OCI-LY7 (cell line): ENCODE measurements at regions of chr14 and their contacts with region 1.

Region 1: DNA sequence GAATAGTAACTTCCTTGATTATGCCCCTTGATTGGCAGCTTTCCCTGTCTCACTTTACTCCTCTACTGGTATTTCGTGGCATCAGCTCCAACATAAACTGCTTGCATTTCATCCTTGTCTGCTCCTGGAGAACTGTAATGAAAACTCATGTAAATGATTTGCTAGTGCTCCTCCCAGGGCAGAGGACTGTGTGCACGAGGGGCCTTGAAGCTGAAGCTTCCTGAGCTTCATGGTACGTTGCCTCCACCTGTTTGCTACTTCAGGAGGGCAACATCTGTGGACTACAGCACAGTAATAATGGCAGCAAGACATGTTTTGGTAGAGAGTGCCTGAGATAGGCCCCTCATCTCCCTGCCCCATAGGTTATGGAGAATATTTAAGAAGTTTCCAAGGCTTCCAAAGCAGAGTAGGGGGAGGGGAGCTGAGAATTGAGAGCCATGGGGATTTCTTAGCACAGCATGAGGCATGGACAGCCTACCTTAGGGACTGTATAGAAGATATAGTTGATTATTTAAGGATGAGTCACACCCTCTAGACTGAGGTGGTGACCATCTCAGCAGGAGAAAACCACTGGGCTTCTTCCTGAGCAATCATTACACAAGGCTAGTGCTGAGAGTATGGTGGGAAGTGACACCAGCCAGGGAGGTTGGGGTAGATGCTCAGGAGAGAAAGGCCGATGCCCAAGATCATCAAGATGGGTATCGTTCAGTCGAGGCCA is 29.5 kb downstream of the CCDC198 start:
- DNase-seq: peak; percentile 93
- H3K4me3 ChIP-seq: peak overlapping the region; percentile 42
- H3K27ac ChIP-seq: peak overlapping the region; percentile 82
- H3K4me1 ChIP-seq: peaks cover 32% of the 10 kb centered on the region
- CTCF ChIP-seq: no peak

Region 2: DNA sequence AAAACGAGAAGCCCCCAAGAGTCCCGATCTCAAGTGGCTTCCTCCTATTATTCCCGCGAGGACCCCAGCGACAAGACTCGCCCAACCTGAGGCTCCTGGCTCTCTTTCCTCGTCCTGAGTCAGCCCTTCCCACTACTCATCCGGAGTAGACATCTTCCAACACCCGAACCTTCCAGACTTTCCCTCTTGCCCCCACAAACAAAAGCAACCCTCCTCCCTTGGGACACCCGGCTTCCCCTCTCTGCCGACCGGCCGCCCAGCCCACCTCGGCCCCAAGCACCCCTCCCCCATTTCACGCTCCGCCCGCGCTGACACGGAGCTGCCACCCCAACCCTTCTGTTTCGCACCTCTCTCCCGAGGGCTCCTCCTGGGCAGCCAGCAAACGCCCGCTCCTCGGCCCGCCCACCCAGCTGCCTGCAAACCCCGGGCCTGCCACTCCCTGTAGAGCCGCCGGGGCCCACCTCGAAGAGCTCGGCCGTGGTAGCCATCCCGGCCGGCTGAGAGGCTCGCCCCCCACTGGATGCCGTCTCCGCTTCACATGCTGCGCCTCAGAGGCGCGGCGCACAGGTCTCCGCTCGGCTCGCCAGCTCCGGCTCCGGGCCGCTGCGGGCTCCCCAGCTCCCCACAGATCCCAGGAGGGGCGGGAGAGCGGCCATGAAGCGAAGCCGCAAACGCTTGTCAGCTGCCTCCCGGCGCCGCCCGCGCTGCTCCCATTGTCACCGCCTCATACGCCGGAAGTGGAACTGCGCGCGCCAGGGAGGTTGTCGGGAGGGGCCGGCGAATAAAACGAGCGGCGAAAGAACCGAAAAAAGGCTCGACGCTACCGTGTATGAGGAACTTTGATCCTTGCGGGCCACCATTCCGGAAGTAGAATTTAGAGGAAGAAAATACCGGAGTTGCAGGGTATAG is 195.8 kb before region 1 on chr14 and contains the starts of genes AP5M1 and EXOC5:
- CTCF ChIA-PET with region 1: no interaction called
- POLR2A ChIA-PET with region 1: no interaction called
- intact Hi-C with region 1: loop called (anchors 5 kb)
- DNase-seq: peak; percentile 94
- H3K4me3 ChIP-seq: peak within 1 kb of the TSS; percentile 95
- H3K27ac ChIP-seq: peak within 1 kb of the TSS; percentile 93
- H3K4me1 ChIP-seq: peaks cover 47% of the 10 kb centered on the region
- CTCF ChIP-seq: no peak; the same call in 1 of the 2 replicates
- total RNA-seq, gene AP5M1: 13.3 and 15.8 TPM in 2 replicates
- total RNA-seq, gene EXOC5: 26.9 and 53.9 TPM in 2 replicates

Region 3: GRCh38 chr14:57382283-57382682 is 81.9 kb before region 1 on chr14:
- CTCF ChIA-PET with region 1: no interaction called
- POLR2A ChIA-PET with region 1: no interaction called
- intact Hi-C with region 1: no loop called
- DNase-seq: no peak
- H3K4me3 ChIP-seq: no peak overlapping the region
- H3K27ac ChIP-seq: no peak overlapping the region
- H3K4me1 ChIP-seq: no peaks in the 10 kb centered on the region
- CTCF ChIP-seq: no peak

Region 4: DNA sequence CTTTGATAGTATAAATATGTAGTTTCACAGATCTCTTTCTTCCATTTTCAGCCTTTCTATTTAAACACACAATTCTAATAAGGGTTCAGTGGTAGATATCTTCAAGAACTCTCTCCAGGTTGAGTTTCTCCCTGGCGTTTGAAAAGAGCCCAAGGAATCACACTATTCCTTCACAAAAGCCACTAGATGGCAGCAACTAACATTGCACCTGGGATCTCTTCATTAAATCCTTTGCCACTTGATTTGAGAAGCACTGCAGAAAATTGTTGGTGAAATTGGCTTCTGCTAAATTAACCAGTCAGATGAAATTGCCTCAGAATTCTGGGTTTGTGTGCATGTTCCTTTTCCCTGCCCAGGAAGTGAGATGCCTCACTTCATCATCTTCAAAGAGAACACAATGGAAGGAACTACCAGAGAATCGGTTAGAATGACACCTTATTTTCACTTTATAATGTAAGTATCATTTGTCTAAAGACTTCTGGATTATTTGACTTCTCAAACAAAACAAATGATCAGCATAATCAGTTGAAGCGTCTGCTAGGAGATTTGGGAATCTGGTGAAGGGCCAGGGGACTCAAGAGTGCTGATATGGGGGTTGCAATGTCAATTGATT is 22.7 kb after region 1 on chr14:
- CTCF ChIA-PET with region 1: interaction called, 4 read pairs
- POLR2A ChIA-PET with region 1: interaction called, 11 read pairs
- intact Hi-C with region 1: no loop called
- DNase-seq: peak; percentile 67
- H3K4me3 ChIP-seq: no peak overlapping the region
- H3K27ac ChIP-seq: no peak overlapping the region
- H3K4me1 ChIP-seq: peaks cover 28% of the 10 kb centered on the region
- CTCF ChIP-seq: peak; percentile 92

Region 5: GRCh38 chr14:57498035-57498434 is 33.9 kb after region 1 on chr14:
- CTCF ChIA-PET with region 1: no interaction called
- POLR2A ChIA-PET with region 1: no interaction called
- intact Hi-C with region 1: no loop called
- DNase-seq: no peak
- H3K4me3 ChIP-seq: no peak overlapping the region
- H3K27ac ChIP-seq: no peak overlapping the region
- H3K4me1 ChIP-seq: no peaks in the 10 kb centered on the region
- CTCF ChIP-seq: no peak

Region 6: GRCh38 chr14:57640036-57640435 is 175.9 kb after region 1 on chr14:
- CTCF ChIA-PET with region 1: no interaction called
- POLR2A ChIA-PET with region 1: no interaction called
- intact Hi-C with region 1: no loop called
- DNase-seq: no peak
- H3K4me3 ChIP-seq: no peak overlapping the region
- H3K27ac ChIP-seq: no peak overlapping the region
- H3K4me1 ChIP-seq: no peaks in the 10 kb centered on the region
- CTCF ChIP-seq: no peak

Region 7: DNA sequence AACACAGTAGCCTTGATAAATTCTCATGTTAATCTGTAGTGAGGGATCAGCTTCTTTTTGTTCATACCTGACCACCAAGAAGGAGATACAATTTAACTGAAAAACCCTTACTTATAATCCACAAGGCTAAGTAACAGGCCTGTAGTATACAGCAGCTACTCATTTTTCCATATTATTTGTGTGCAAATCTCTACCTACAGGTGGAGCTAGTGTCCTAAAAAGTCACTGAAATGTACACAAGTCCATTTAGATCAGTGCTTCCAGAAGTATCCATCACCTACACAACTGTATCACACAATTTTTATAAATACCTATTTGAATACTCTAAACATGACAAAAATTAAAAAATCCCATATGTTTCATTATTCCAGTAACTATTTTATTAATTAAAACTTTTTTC is 228.5 kb after region 1 on chr14:
- CTCF ChIA-PET with region 1: no interaction called
- POLR2A ChIA-PET with region 1: interaction called, 10 read pairs
- intact Hi-C with region 1: no loop called
- DNase-seq: peak; percentile 23
- H3K4me3 ChIP-seq: no peak overlapping the region
- H3K27ac ChIP-seq: no peak overlapping the region
- H3K4me1 ChIP-seq: no peaks in the 10 kb centered on the region
- CTCF ChIP-seq: peak; percentile 79

Region 8: GRCh38 chr14:58705066-58705465 is 1240.9 kb after region 1 on chr14:
- CTCF ChIA-PET with region 1: no interaction called
- POLR2A ChIA-PET with region 1: no interaction called
- intact Hi-C with region 1: no loop called
- DNase-seq: no peak
- H3K4me3 ChIP-seq: no peak overlapping the region
- H3K27ac ChIP-seq: no peak overlapping the region
- H3K4me1 ChIP-seq: no peaks in the 10 kb centered on the region
- CTCF ChIP-seq: no peak